Right cardiac atrium (tissue), 5 donors: ENCODE measurements at regions of chr5 and their contacts with region 1.

Region 1: DNA sequence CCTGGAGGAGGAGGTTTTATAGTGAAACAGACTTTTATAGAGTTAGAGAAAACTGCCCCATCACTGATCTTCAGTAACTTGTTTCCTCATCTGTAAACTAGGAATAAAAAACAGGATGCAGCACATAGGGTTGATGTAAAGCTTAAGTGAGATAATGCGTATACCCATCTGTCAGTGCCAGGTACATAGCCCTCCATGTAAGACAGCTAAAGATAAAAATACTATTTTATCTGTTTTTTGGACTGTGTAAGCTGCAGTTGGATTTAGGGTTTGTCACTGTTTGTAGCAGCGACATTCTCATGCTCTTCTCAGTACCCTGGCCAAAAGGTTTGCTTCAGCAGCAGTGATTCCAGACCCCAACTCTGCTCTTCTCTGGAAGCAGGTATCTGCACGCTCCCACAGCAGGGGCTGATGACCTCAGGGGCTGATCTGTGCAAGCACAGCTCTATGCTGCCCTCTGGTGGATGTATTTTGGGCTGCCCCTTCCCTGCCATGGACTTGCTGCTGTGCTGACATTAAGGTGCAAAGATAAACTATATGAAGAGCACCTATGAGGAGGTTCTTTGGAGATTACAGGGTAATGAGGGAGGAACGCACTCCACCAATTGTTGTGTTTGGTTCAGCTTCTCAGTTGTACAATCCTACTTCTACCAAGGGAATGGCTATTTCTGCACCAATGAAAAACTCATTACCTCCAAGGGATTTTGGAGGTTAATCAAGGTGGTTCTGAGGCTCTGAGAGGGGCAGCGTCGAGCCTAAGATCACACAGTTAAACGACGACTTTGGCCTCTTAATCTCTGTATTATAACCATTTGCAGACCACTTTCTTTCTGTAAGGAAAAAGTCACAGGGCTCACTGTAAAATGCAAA is 13.1 kb downstream of the HMHB1 start:
- DNase-seq: peak; percentile 83 to 90 (median 88)
- ATAC-seq: peak; percentile 94
- H3K4me3 ChIP-seq: no peak overlapping the region
- H3K27ac ChIP-seq: no peak overlapping the region
- H3K4me1 ChIP-seq: peaks cover 2% of the 10 kb centered on the region
- H3K27me3 ChIP-seq: no peaks in the 10 kb centered on the region

Region 2: DNA sequence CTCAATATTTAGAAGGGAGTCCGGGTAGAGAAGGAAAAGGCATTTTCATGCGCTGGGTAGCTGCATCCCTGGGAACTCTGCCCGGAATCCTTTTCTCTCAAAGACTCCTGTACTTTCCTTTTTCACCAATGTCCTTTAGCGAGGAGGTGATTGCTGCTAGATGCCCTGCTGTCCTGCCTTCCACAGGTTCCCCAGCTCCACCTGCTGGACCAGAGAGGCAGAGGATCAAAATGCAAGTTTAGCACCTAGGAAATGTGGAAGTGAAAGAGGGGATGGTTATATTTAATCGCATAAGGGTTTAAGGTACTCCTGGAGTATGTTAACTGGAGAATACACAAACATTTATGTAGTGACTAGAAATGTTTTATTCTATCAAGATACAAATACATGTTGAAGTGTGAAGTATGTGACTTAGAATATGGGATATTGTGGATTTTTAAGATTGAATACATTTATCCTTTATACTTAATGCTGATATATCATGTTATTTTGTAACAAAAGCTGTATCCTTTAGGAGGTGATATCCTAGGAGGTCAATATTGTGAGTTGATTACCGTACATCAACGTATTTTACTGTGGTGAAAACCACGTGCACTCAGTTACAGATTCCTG is 909.2 kb before region 1 on chr5:
- intact Hi-C with region 1: loop called in 1 of 4 experiments (anchors 10 kb)
- DNase-seq: no peak
- ATAC-seq: no peak
- H3K4me3 ChIP-seq: no peak overlapping the region
- H3K27ac ChIP-seq: no peak overlapping the region
- H3K4me1 ChIP-seq: no peaks in the 10 kb centered on the region
- H3K27me3 ChIP-seq: no peaks in the 10 kb centered on the region

Region 3: GRCh38 chr5:143002459-143003328 is 822.4 kb before region 1 on chr5:
- intact Hi-C with region 1: loop called in 1 of 4 experiments (anchors 10 kb)
- DNase-seq: peak in 1 of 3 donors; percentile 45
- ATAC-seq: peak; percentile 80 to 85
- H3K4me3 ChIP-seq: no peak overlapping the region
- H3K27ac ChIP-seq: peak overlapping the region; percentile 83
- H3K4me1 ChIP-seq: peaks cover 25% of the 10 kb centered on the region
- H3K27me3 ChIP-seq: no peaks in the 10 kb centered on the region

Region 4: DNA sequence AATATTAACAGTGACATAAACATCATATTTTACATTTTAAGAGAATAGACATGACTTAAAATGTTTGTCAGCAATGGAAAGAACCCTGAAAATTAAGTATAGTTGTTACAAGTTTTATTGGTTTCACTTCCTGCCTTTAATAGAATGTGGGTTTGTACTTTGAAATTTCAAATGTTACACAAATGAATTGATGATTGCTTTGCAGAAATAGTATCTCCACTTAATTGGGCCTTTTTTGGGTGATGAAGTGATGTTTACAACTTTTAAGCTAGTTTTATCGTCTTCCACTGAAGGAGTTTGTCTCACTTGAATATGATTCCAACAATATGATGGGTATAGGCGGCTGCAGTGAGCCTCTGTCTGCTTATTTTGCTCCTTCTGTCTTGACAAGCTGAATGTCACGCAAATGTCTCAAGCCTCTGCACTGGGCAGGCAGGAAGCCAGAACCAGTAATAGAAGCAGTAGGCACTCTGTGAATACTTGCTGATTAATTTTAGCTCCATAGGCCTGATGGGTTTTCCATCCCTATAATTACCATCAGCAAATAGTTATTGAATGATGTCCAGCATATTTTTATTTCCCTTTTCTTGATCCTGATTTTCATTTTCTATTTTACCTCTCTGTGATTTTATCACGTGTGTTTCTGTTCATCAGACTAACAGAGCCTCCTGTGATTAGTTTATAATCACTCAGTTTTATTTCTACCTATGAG is 411.0 kb before region 1 on chr5:
- intact Hi-C with region 1: loop called (anchors 5 to 10 kb)
- DNase-seq: peak in 2 of 3 donors; percentile 32 to 55
- ATAC-seq: peak in 1 of 2 donors; percentile 47
- H3K4me3 ChIP-seq: no peak overlapping the region
- H3K27ac ChIP-seq: no peak overlapping the region
- H3K4me1 ChIP-seq: no peaks in the 10 kb centered on the region
- H3K27me3 ChIP-seq: no peaks in the 10 kb centered on the region